Psoas muscle (tissue), 8 donors: ENCODE measurements at regions of chr14 and their contacts with region 1.

Region 1: GRCh38 chr14:23154964-23155587 is 28.4 kb downstream of the SLC7A8 start:
- DNase-seq: peak; percentile 83 to 92
- ATAC-seq: peak; percentile 81 to 87 (median 84)
- H3K4me3 ChIP-seq: peak overlapping the region; percentile 68
- H3K27ac ChIP-seq: peak overlapping the region; percentile 96
- H3K4me1 ChIP-seq: peaks cover 56% of the 10 kb centered on the region
- H3K27me3 ChIP-seq: no peaks in the 10 kb centered on the region
- CTCF ChIP-seq: no peak

Region 2: DNA sequence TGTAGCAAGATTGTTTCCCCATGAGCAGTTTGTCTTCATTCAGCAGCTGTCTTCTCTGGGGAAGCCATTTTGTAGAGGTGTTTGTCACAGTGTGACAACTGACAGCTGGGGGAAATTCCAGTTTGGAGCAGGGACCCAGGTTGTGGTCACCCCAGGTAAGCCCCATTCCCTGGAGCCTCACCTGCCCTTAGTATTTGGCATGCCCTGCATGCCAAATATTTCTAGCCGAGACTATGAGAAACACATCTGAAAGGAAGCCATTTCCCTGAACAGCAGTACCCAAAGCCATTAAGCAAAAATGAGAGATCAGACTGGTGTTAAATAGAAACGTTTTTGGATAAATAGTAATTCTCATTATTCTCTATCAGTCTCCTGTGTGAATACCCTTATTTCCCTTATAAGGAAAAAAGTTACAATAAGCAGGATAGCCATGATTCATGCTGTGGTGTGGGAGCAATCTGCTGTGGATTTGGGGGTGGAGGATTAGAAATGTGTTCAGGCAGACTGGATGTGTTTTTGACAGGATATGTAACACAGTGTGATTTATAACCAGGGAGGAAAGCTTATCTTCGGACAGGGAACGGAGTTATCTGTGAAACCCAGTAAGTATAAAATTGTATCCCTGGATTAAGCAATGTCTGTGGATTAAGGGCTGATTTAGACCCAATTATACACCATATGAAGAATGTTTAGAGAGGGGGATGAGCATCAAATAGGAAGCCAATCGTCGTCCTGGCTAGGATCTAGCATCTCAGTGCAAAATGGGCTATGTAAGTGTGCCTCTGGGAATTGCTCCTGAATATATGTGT is 635.0 kb before region 1 on chr14:
- intact Hi-C with region 1: no loop called
- DNase-seq: no peak
- ATAC-seq: no peak
- H3K4me3 ChIP-seq: no peak overlapping the region
- H3K27ac ChIP-seq: no peak overlapping the region
- H3K4me1 ChIP-seq: peaks cover 2% of the 10 kb centered on the region
- H3K27me3 ChIP-seq: peaks cover 0 to 4% (median 0%) of the 10 kb centered on the region in 3 donors
- CTCF ChIP-seq: no peak

Region 3: GRCh38 chr14:23034483-23035302 is 120.4 kb before region 1 on chr14 and contains the start of gene PSMB5:
- intact Hi-C with region 1: no loop called
- DNase-seq: peak; percentile 89 to 94
- ATAC-seq: peak; percentile 97
- H3K4me3 ChIP-seq: peak within 1 kb of the TSS; percentile 88
- H3K27ac ChIP-seq: peak within 1 kb of the TSS; percentile 93
- H3K4me1 ChIP-seq: peaks cover 23% of the 10 kb centered on the region
- H3K27me3 ChIP-seq: no peaks in the 10 kb centered on the region
- CTCF ChIP-seq: no peak
- total RNA-seq, gene PSMB5: 156 to 307 (median 250) TPM

Region 4: GRCh38 chr14:23186913-23187654 is 32.0 kb after region 1 on chr14:
- intact Hi-C with region 1: loop called in 1 of 2 experiments (anchors 2 kb)
- DNase-seq: no peak
- ATAC-seq: peak; percentile 68 to 73 (median 70)
- H3K4me3 ChIP-seq: no peak overlapping the region
- H3K27ac ChIP-seq: no peak overlapping the region
- H3K4me1 ChIP-seq: peaks cover 4% of the 10 kb centered on the region
- H3K27me3 ChIP-seq: no peaks in the 10 kb centered on the region
- CTCF ChIP-seq: peak; percentile 79

Region 5: GRCh38 chr14:23275412-23275811 is 120.3 kb after region 1 on chr14:
- intact Hi-C with region 1: no loop called
- DNase-seq: no peak
- ATAC-seq: peak in 1 of 4 donors; percentile 30
- H3K4me3 ChIP-seq: no peak overlapping the region
- H3K27ac ChIP-seq: no peak overlapping the region
- H3K4me1 ChIP-seq: peaks cover 4% of the 10 kb centered on the region
- H3K27me3 ChIP-seq: no peaks in the 10 kb centered on the region
- CTCF ChIP-seq: no peak

Region 6: DNA sequence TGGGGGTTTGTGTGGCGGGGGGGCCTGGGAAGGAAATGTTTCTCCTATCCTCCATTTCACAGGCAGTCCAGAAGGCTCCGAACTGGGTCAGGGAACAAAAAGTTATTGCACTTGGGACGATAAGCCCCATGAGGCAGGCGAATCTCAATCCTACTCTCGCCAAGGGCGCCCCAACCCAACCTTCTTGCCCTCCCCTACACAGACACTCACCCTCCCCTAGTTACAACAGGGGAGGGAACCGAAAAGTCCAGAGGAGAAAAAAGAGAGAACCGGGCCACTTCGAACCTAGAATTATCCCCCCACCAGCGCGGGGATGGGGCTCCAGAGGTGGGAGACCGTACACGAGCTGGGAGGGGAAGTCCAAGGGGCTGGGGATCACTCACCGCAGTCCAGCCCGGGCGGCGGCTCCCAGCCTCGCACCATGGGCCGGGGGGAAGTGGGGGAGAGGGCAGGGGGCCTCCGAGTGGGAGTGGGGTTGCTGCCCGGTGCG is 130.5 kb after region 1 on chr14:
- intact Hi-C with region 1: no loop called
- DNase-seq: no peak
- ATAC-seq: peak; percentile 4 to 48 (median 29)
- H3K4me3 ChIP-seq: peak overlapping the region; percentile 94
- H3K27ac ChIP-seq: peak overlapping the region; percentile 89
- H3K4me1 ChIP-seq: peaks cover 12% of the 10 kb centered on the region
- H3K27me3 ChIP-seq: no peaks in the 10 kb centered on the region
- CTCF ChIP-seq: no peak